CD4-positive, alpha-beta memory T cell (primary cell): ENCODE measurements at regions of chr3 and their contacts with region 1.

Region 1: GRCh38 chr3:187139126-187139894 is at the start of gene RPL39L:
- DNase-seq: peak; percentile 91 to 93 (median 92)
- H3K4me3 ChIP-seq: peak within 1 kb of the TSS; percentile 24 to 86
- H3K4me3 Mint-ChIP-seq: peak within 1 kb of the TSS; percentile 82 to 94 (median 91)
- H3K27ac ChIP-seq: peak within 1 kb of the TSS; percentile 74
- H3K27ac Mint-ChIP-seq: peak within 1 kb of the TSS; percentile 87 to 97 (median 95)
- H3K4me1 ChIP-seq: peaks cover 17% of the 10 kb centered on the region
- H3K4me1 Mint-ChIP-seq: peaks cover 9 to 34% (median 18%) of the 10 kb centered on the region in 4 donors
- H3K27me3 ChIP-seq: no peaks in the 10 kb centered on the region
- H3K27me3 Mint-ChIP-seq: no peaks in the 10 kb centered on the region
- total RNA-seq, gene RPL39L: 2.6 to 3.6 TPM

Region 2: GRCh38 chr3:186826976-186827731 is 312.2 kb before region 1 on chr3:
- CTCF ChIA-PET with region 1: interaction called, 4 read pairs
- POLR2A ChIA-PET with region 1: no interaction called
- intact Hi-C with region 1: loop called (anchors 5 kb)
- DNase-seq: peak; percentile 81 to 89 (median 87)
- H3K4me3 ChIP-seq: peak overlapping the region in 1 of 2 donors; percentile 65
- H3K4me3 Mint-ChIP-seq: peak overlapping the region; percentile 65 to 93 (median 78)
- H3K27ac ChIP-seq: peak overlapping the region; percentile 47
- H3K27ac Mint-ChIP-seq: peak overlapping the region in 2 of 7 donors; percentile 18 to 28
- H3K4me1 ChIP-seq: peaks cover 25% of the 10 kb centered on the region
- H3K4me1 Mint-ChIP-seq: peaks cover 5 to 16% (median 12%) of the 10 kb centered on the region in 4 donors
- H3K27me3 ChIP-seq: peaks cover 21% of the 10 kb centered on the region
- H3K27me3 Mint-ChIP-seq: peaks cover 30 to 38% of the 10 kb centered on the region in 2 donors

Region 3: GRCh38 chr3:187031934-187032333 is 107.4 kb before region 1 on chr3:
- CTCF ChIA-PET with region 1: interaction called, 11 read pairs
- POLR2A ChIA-PET with region 1: interaction called, 27 read pairs
- intact Hi-C with region 1: no loop called
- DNase-seq: no peak
- H3K4me3 ChIP-seq: no peak overlapping the region
- H3K4me3 Mint-ChIP-seq: peak overlapping the region; percentile 37 to 97 (median 74)
- H3K27ac ChIP-seq: peak overlapping the region; percentile 31
- H3K27ac Mint-ChIP-seq: peak overlapping the region; percentile 71 to 95 (median 85)
- H3K4me1 ChIP-seq: peaks cover 69% of the 10 kb centered on the region
- H3K4me1 Mint-ChIP-seq: peaks cover 56 to 85% (median 69%) of the 10 kb centered on the region in 4 donors
- H3K27me3 ChIP-seq: no peaks in the 10 kb centered on the region
- H3K27me3 Mint-ChIP-seq: no peaks in the 10 kb centered on the region

Region 4: DNA sequence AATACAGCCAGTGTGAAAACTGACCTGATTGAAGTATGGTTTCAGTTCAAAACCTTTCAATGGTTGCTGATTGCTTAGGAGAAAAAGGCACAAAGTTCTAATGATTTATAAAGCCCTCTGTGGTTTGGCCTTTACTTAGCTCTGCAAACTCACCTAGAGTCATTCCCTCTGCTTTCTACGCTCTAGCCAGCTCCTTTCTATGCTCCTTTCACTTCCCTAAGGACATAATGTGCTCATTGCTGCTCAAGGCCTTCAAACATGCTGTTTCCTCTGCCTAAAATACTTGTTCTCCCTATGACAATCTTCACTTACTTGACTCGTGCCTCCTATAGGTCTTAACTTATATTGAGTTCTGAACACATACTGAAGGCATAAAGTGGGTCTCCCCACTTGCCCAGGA is 19.0 kb before region 1 on chr3:
- CTCF ChIA-PET with region 1: interaction called, 94 read pairs
- POLR2A ChIA-PET with region 1: interaction called, 6 read pairs
- intact Hi-C with region 1: no loop called
- DNase-seq: no peak
- H3K4me3 ChIP-seq: no peak overlapping the region
- H3K4me3 Mint-ChIP-seq: no peak overlapping the region
- H3K27ac ChIP-seq: no peak overlapping the region
- H3K27ac Mint-ChIP-seq: peak overlapping the region in 1 of 7 donors; percentile 19
- H3K4me1 ChIP-seq: no peaks in the 10 kb centered on the region
- H3K4me1 Mint-ChIP-seq: no peaks in the 10 kb centered on the region
- H3K27me3 ChIP-seq: no peaks in the 10 kb centered on the region
- H3K27me3 Mint-ChIP-seq: no peaks in the 10 kb centered on the region

Region 5: GRCh38 chr3:187150599-187150998 is 11.3 kb after region 1 on chr3:
- CTCF ChIA-PET with region 1: interaction called, 178 read pairs
- POLR2A ChIA-PET with region 1: interaction called, 16 read pairs
- intact Hi-C with region 1: loop called (anchors 1 kb)
- DNase-seq: peak; percentile 47 to 61 (median 55)
- H3K4me3 ChIP-seq: no peak overlapping the region
- H3K4me3 Mint-ChIP-seq: no peak overlapping the region
- H3K27ac ChIP-seq: no peak overlapping the region
- H3K27ac Mint-ChIP-seq: no peak overlapping the region
- H3K4me1 ChIP-seq: no peaks in the 10 kb centered on the region
- H3K4me1 Mint-ChIP-seq: peaks cover 0 to 6% (median under 1%) of the 10 kb centered on the region in 4 donors
- H3K27me3 ChIP-seq: no peaks in the 10 kb centered on the region
- H3K27me3 Mint-ChIP-seq: peaks cover 6 to 13% of the 10 kb centered on the region in 2 donors

Region 6: DNA sequence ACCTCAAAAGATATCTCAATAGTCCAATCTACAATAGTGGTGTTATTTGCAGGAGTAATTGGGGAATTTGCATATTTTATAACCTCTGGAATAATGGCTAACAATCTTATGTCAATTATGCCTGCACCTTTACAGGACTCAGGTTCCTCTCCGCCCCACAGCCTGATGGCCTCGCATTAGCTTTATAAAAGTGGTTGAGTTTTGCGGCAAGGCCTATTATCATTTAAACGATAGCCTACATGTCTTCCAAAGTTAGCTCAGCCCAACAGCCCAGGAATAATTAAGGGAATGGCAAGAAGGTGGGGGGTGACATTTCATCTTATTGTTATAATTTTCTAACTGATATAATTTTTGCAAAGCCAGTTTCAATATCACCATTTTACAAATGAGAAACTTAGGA is 326.2 kb after region 1 on chr3:
- CTCF ChIA-PET with region 1: no interaction called
- POLR2A ChIA-PET with region 1: no interaction called
- intact Hi-C with region 1: no loop called
- DNase-seq: no peak
- H3K4me3 ChIP-seq: no peak overlapping the region
- H3K4me3 Mint-ChIP-seq: no peak overlapping the region
- H3K27ac ChIP-seq: no peak overlapping the region
- H3K27ac Mint-ChIP-seq: no peak overlapping the region
- H3K4me1 ChIP-seq: no peaks in the 10 kb centered on the region
- H3K4me1 Mint-ChIP-seq: no peaks in the 10 kb centered on the region
- H3K27me3 ChIP-seq: no peaks in the 10 kb centered on the region
- H3K27me3 Mint-ChIP-seq: peaks cover 13 to 17% of the 10 kb centered on the region in 2 donors